GM12878 (cell line): ENCODE measurements at regions of chr18 and their contacts with region 1.

Region 1: GRCh38 chr18:72762515-72763122 is 105.2 kb downstream of the NETO1 start:
- DNase-seq: peak; percentile 12
- ATAC-seq: peak; percentile 86
- H3K4me3 ChIP-seq: no peak overlapping the region
- H3K27ac ChIP-seq: no peak overlapping the region
- H3K4me1 ChIP-seq: no peaks in the 10 kb centered on the region
- H3K27me3 ChIP-seq: no peaks in the 10 kb centered on the region
- CTCF ChIP-seq: peak; percentile 57 to 64 (median 60)
- EP300 ChIP-seq: no peak
- POLR2A ChIP-seq: no peak
- RAD21 ChIP-seq: peak; percentile 88

Region 2: GRCh38 chr18:72566290-72566689 is 196.3 kb before region 1 on chr18:
- CTCF ChIA-PET with region 1: no interaction called
- POLR2A ChIA-PET with region 1: no interaction called
- RAD21 ChIA-PET with region 1: no interaction called
- SMC1A ChIA-PET with region 1: no interaction called
- in situ Hi-C with region 1: no loop called
- intact Hi-C with region 1: no loop called
- DNase-seq: no peak
- ATAC-seq: no peak
- H3K4me3 ChIP-seq: no peak overlapping the region
- H3K27ac ChIP-seq: no peak overlapping the region
- H3K4me1 ChIP-seq: no peaks in the 10 kb centered on the region
- H3K27me3 ChIP-seq: no peaks in the 10 kb centered on the region
- CTCF ChIP-seq: no peak
- EP300 ChIP-seq: no peak
- POLR2A ChIP-seq: no peak
- RAD21 ChIP-seq: no peak

Region 3: GRCh38 chr18:72652990-72653593 is 109.5 kb before region 1 on chr18:
- CTCF ChIA-PET with region 1: no interaction called
- POLR2A ChIA-PET with region 1: no interaction called
- RAD21 ChIA-PET with region 1: no interaction called
- SMC1A ChIA-PET with region 1: interaction called, 4 read pairs
- in situ Hi-C with region 1: no loop called
- intact Hi-C with region 1: loop called (anchors 5 kb)
- DNase-seq: no peak
- ATAC-seq: peak; percentile 99
- H3K4me3 ChIP-seq: no peak overlapping the region
- H3K27ac ChIP-seq: no peak overlapping the region
- H3K4me1 ChIP-seq: no peaks in the 10 kb centered on the region
- H3K27me3 ChIP-seq: no peaks in the 10 kb centered on the region
- CTCF ChIP-seq: peak; percentile 71 to 84 (median 73)
- EP300 ChIP-seq: no peak
- POLR2A ChIP-seq: no peak
- RAD21 ChIP-seq: peak; percentile 82

Region 4: DNA sequence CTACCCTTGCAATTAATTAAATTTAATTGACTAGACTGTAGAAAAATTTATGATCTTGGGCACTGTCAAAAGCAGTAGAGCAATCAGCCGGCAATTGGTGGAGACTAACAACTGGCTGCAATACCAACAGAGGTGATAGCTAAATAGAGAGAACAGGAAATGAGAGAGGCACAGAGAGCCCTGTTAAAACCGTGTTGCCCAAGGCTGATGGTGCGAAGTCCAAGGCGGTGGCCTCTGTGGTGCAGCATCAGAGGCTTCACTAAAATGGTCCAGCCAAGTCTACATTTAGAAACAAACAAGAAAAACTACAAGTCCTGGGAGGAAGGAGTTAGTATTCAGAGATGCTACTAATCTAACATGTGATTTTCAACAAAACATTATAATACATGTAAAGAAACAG is 10.4 kb before region 1 on chr18:
- CTCF ChIA-PET with region 1: interaction called, 10 read pairs
- POLR2A ChIA-PET with region 1: no interaction called
- RAD21 ChIA-PET with region 1: interaction called, 4 read pairs
- SMC1A ChIA-PET with region 1: interaction called, 12 read pairs
- in situ Hi-C with region 1: no loop called
- intact Hi-C with region 1: no loop called
- DNase-seq: no peak
- ATAC-seq: no peak
- H3K4me3 ChIP-seq: no peak overlapping the region
- H3K27ac ChIP-seq: no peak overlapping the region
- H3K4me1 ChIP-seq: no peaks in the 10 kb centered on the region
- H3K27me3 ChIP-seq: no peaks in the 10 kb centered on the region
- CTCF ChIP-seq: no peak
- EP300 ChIP-seq: no peak
- POLR2A ChIP-seq: no peak
- RAD21 ChIP-seq: no peak

Region 5: GRCh38 chr18:73136134-73136533 is 373.5 kb after region 1 on chr18:
- CTCF ChIA-PET with region 1: interaction called, 41 read pairs
- POLR2A ChIA-PET with region 1: no interaction called
- RAD21 ChIA-PET with region 1: interaction called, 14 read pairs
- SMC1A ChIA-PET with region 1: interaction called, 26 read pairs
- in situ Hi-C with region 1: loop called (anchors 10 kb)
- intact Hi-C with region 1: loop called (anchors 1 kb)
- DNase-seq: no peak
- ATAC-seq: peak; percentile 75
- H3K4me3 ChIP-seq: no peak overlapping the region
- H3K27ac ChIP-seq: no peak overlapping the region
- H3K4me1 ChIP-seq: no peaks in the 10 kb centered on the region
- H3K27me3 ChIP-seq: no peaks in the 10 kb centered on the region
- CTCF ChIP-seq: peak in 2 of 3 experiments; percentile 33 to 34; a peak in 3 of 6 replicates
- EP300 ChIP-seq: no peak
- POLR2A ChIP-seq: no peak
- RAD21 ChIP-seq: peak; percentile 66

Region 6: GRCh38 chr18:73835656-73836364 is 1073.2 kb after region 1 on chr18:
- CTCF ChIA-PET with region 1: no interaction called
- POLR2A ChIA-PET with region 1: no interaction called
- RAD21 ChIA-PET with region 1: no interaction called
- SMC1A ChIA-PET with region 1: interaction called, 3 read pairs
- in situ Hi-C with region 1: loop called (anchors 5 kb)
- intact Hi-C with region 1: no loop called
- DNase-seq: no peak
- ATAC-seq: no peak
- H3K4me3 ChIP-seq: no peak overlapping the region
- H3K27ac ChIP-seq: no peak overlapping the region
- H3K4me1 ChIP-seq: no peaks in the 10 kb centered on the region
- H3K27me3 ChIP-seq: no peaks in the 10 kb centered on the region
- CTCF ChIP-seq: no peak
- EP300 ChIP-seq: no peak
- POLR2A ChIP-seq: no peak
- RAD21 ChIP-seq: no peak

Region 7: GRCh38 chr18:73842795-73843394 is 1080.3 kb after region 1 on chr18:
- CTCF ChIA-PET with region 1: interaction called, 24 read pairs
- POLR2A ChIA-PET with region 1: no interaction called
- RAD21 ChIA-PET with region 1: interaction called, 13 read pairs
- SMC1A ChIA-PET with region 1: interaction called, 6 read pairs
- in situ Hi-C with region 1: loop called (anchors 5 kb)
- intact Hi-C with region 1: loop called (anchors 1 kb)
- DNase-seq: peak; percentile 1
- ATAC-seq: peak; percentile 81
- H3K4me3 ChIP-seq: no peak overlapping the region
- H3K27ac ChIP-seq: no peak overlapping the region
- H3K4me1 ChIP-seq: no peaks in the 10 kb centered on the region
- H3K27me3 ChIP-seq: no peaks in the 10 kb centered on the region
- CTCF ChIP-seq: peak; percentile 80 to 93 (median 93)
- EP300 ChIP-seq: no peak
- POLR2A ChIP-seq: no peak
- RAD21 ChIP-seq: peak; percentile 83

Region 8: DNA sequence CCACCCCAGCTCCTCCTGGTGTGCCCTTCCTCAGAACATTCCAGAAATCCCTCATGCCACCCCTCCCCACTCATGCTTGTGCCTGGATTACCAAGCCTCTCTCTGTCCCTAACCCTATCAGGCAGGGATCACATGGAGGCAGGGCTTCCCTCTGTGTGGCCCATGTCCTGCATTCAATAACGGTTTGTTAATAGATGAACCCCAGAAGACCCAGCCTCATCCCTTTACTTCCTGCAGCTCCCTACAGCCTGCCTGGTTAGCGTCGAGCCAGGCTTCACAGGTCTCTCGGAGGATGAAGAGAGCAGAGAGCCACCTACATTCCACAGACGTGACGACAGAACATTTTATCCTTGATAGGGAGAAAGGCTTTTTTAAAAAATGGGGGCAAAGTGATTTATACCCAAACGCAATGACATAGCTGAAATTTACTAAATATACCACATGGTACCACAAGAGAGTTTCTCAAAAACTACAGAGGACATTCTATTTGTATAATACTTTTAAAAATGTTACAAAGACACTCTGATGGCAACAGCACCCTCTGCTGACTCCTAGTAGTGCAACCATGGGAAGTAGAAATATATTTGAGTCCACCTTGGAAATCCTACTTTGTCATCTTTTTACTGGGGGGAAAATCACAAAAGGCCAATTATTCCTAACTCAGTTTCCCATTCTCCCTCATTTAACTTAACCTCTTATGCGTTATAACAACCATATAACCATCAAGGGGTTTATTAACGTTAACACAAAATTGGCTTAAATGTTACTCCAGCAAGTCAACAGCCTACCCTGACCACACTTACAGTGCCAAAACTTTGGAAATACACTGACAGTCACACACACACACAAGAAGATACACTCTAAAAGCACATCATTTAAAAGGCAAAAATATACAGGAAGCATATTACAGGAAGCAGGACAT is 1354.3 kb after region 1 on chr18:
- CTCF ChIA-PET with region 1: no interaction called
- POLR2A ChIA-PET with region 1: no interaction called
- RAD21 ChIA-PET with region 1: no interaction called
- SMC1A ChIA-PET with region 1: no interaction called
- in situ Hi-C with region 1: loop called (anchors 25 kb)
- intact Hi-C with region 1: loop called (anchors 10 kb)
- DNase-seq: no peak
- ATAC-seq: peak; percentile 57
- H3K4me3 ChIP-seq: no peak overlapping the region
- H3K27ac ChIP-seq: no peak overlapping the region
- H3K4me1 ChIP-seq: no peaks in the 10 kb centered on the region
- H3K27me3 ChIP-seq: no peaks in the 10 kb centered on the region; a peak in 1 of 4 replicates
- CTCF ChIP-seq: peak; percentile 45 to 52 (median 47); a peak in 5 of 6 replicates
- EP300 ChIP-seq: no peak
- POLR2A ChIP-seq: no peak
- RAD21 ChIP-seq: peak; percentile 70